Endothelial cell of umbilical vein (primary cell): ENCODE measurements at regions of chr17 and their contacts with region 1.

Region 1: GRCh38 chr17:45385331-45385997 is 47.2 kb downstream of the ARHGAP27 start:
- DNase-seq: peak; percentile 77
- H3K4me3 ChIP-seq: no peak overlapping the region
- H3K27ac ChIP-seq: no peak overlapping the region
- H3K4me1 ChIP-seq: no peaks in the 10 kb centered on the region
- H3K27me3 ChIP-seq: peaks cover 0 to 6% of the 10 kb centered on the region in 2 experiments
- CTCF ChIP-seq: peak; percentile 94 to 97
- POLR2A ChIP-seq: no peak

Region 2: DNA sequence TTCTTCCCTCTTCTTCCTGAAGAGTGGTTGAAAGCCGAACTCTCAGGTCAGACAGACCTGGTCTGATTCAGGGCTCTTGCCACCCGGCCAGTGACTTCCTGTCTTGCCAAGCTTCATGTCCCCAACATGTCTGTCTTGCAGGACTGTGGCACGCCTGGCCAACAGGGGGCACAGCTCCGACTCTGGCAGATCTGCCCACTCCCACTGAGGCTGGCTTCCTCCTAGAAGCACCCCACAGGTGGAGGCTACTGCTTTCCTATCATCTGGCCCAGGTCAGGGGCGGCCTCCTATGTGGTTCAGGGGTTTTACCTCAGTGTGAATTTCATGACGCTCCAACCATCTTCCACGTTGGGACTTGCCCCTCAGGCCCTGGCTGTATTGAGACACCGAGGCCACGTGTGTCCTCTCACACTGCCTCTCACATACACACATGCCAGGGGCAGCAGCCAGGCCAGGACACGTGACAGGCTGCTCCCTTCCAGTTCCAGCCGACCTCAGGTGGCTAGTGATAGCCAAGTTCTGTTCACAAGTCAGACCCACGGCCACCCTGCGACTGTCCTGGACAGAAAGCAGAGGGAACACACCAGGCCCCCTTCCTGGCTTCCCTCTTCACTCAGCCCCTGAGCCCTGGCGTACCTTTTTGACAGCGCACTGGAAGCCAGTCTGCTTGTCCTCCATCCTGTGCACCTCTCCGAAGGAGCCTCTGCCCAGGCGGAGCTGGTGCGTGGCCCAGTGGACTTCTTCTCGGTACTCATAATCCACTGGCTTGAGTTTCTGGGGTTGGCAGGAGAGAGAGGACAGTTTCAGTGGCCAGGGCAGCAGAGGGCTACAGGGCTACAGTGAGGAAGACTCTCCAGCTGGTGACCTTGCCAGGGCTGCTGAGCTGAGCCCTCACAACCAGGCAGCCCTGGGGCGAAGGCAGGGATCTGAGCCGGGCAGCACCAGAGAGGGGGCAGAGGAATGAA is 101.0 kb before region 1 on chr17:
- CTCF ChIA-PET with region 1: interaction called, 24 read pairs
- POLR2A ChIA-PET with region 1: no interaction called
- dilution Hi-C with region 1: no loop called
- intact Hi-C with region 1: loop called (anchors 1 kb)
- DNase-seq: no peak
- H3K4me3 ChIP-seq: no peak overlapping the region
- H3K27ac ChIP-seq: no peak overlapping the region
- H3K4me1 ChIP-seq: no peaks in the 10 kb centered on the region
- H3K27me3 ChIP-seq: no peaks in the 10 kb centered on the region
- CTCF ChIP-seq: peak; percentile 35 to 40
- POLR2A ChIP-seq: no peak